AG04449 (cell line): ENCODE measurements at regions of chr18 and their contacts with region 1.

Region 1: DNA sequence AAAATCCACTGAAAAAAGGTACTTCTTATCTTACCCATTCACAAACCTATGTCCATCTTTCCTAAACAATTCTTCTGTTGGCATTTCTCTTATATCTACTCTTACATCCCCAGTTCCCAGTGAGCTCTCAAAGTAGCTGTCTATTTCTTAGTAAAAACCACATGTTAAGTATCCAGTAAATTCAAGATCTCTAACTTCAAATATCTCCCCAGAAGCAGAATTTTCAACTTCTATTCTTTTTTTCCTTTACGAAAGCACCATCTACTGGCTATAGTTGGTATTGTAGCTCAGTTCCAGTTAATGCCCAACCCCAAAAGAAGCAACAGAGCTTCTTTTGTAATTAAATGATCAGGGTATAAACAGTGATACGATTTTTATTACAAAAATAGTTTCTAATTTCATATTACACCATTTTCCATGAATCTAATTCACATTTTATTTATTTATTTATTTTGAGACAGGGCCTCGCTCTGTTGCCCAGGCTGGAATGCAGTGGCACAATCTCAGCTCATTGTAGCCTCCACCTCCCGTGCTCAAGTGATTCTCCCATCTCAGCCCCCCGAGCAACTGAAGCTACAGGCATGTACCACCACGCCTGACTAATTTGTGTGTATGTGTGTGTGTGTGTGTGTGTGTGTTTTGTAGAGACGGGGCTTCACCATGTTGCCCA is 28.5 kb downstream of the HRH4 start:
- DNase-seq: no peak
- H3K4me3 ChIP-seq: no peak overlapping the region
- CTCF ChIP-seq: peak; percentile 34

Region 2: GRCh38 chr18:24176727-24177416 is 312.1 kb before region 1 on chr18:
- CTCF ChIA-PET with region 1: interaction called, 52 read pairs
- POLR2A ChIA-PET with region 1: no interaction called
- DNase-seq: no peak
- H3K4me3 ChIP-seq: no peak overlapping the region
- CTCF ChIP-seq: peak; percentile 80

Region 3: DNA sequence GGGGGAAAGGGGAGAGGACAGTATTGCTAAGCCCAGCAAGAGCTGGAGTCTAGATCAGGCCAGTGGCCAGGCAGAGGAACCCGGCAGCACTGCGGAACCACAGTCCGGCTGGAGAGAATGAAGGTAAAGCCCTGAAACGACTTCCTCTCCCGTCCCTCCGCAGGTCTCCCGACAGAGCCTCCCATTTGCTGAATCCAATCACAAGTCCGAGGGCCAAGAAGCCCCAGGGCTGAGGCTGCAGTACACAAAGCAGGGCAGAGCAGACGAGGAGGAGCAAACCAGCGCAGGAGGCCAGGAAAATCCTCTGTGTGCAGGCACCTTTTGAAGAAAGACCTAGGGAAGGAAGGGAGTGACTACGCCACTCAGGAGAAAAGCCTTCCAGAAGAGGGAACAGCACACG is 195.7 kb before region 1 on chr18:
- CTCF ChIA-PET with region 1: no interaction called
- POLR2A ChIA-PET with region 1: no interaction called
- DNase-seq: no peak
- H3K4me3 ChIP-seq: no peak overlapping the region
- CTCF ChIP-seq: no peak

Region 4: GRCh38 chr18:24368749-24369148 is 120.2 kb before region 1 on chr18:
- CTCF ChIA-PET with region 1: interaction called, 183 read pairs
- POLR2A ChIA-PET with region 1: no interaction called
- DNase-seq: no peak
- H3K4me3 ChIP-seq: no peak overlapping the region
- CTCF ChIP-seq: no peak

Region 5: DNA sequence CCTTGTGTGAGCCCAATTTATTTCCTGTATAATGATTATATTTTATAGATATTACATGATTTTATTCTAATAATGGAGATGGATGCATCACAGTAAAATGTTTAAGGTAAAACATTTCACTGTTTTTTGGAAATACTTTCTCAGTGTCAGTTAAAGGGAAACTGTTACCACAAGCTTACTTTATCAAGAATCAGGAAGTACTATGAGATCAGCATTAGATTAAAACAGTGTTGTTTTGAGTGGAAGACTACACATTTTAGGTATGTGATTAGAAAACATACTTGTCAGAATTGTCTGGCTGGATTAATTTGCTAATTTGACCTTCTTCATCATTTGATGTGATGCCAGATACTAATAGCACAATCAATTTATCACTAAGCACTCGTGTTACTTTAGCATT is 28.6 kb before region 1 on chr18 and contains the start of gene HRH4:
- CTCF ChIA-PET with region 1: interaction called, 26 read pairs
- POLR2A ChIA-PET with region 1: no interaction called
- DNase-seq: no peak
- H3K4me3 ChIP-seq: no peak within 1 kb of the TSS
- CTCF ChIP-seq: no peak

Region 6: GRCh38 chr18:24475926-24476589 is 12.9 kb before region 1 on chr18:
- CTCF ChIA-PET with region 1: interaction called, 35 read pairs
- POLR2A ChIA-PET with region 1: no interaction called
- DNase-seq: no peak
- H3K4me3 ChIP-seq: no peak overlapping the region
- CTCF ChIP-seq: no peak

Region 7: GRCh38 chr18:24631243-24632025 is 142.5 kb after region 1 on chr18:
- CTCF ChIA-PET with region 1: no interaction called
- POLR2A ChIA-PET with region 1: no interaction called
- DNase-seq: no peak
- H3K4me3 ChIP-seq: no peak overlapping the region
- CTCF ChIP-seq: no peak

Region 8: DNA sequence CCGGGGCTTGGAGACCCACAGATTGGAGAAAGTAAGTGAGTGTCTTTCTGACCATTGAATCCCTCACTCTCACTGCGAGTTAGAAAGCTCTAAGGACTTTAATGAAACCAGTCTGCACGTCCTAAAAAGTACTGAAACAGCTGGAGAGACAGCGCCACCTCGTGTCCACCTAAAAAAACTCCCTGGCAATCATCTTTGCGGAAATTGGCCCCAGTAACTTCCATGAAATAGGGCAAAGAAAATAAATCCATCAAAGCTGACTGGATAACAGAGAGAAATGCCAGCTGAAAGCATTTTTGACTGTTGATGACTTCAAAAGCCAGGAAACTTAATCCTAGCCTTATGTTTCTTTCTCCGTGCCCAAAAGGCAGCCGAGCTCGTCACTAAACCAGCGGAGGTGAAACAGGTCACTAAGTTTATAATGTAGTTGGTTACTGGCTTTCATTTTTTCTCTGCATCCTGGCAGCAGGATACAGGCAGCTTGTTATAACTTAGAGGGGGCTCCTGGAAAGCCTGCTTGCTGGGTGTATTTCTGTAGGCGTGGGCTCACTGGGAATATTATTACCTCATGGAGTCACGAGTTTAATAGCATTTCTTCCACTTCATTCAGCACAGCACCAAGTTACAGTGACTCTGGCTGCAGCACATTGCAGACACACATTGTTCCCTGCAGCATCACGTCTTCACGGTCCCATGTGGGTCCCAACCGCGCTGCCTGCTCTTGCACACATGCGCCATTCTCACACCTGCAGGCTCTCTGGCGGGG is 238.0 kb after region 1 on chr18:
- CTCF ChIA-PET with region 1: interaction called, 226 read pairs
- POLR2A ChIA-PET with region 1: interaction called, 4 read pairs
- DNase-seq: peak; percentile 46
- H3K4me3 ChIP-seq: peak overlapping the region; percentile 42
- CTCF ChIP-seq: peak; percentile 77